Natural killer cell (primary cell): ENCODE measurements at regions of chr14 and their contacts with region 1.

Region 1: DNA sequence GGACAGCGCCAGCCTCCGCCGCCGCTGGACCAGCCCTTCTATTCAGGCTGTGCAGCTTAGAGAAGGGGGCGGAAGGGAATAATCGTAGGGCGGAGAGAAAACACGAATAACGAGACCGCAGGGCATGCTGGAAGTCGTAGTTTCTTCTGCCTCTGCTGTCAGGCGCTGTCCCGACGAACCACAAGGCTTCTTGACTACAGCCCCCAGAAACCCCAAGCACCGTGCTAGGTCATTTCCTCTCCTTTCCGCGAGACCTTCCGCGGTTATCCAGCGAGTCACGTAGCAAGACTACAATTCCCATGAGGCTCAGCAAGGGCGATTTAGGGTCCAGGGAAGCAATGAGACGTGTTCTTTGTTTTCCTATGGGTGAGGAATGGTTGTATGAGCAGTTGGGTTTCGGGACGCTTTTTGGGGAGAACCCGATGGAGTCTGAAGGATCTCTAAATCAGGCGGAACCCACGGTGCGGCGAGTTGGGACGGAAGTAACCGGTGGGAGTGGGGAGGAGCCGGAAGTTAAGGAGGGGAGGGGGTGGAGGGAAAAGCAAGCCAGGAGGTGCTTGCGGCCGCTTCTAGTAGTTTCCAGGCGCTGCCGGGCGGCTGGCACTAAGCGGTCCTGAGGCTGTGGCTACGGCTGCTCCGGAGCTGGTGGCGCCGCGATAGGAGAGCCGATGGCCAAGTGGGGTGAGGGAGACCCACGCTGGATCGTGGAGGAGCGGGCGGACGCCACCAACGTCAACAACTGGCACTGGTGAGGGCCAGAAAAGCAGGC is at the starts of genes AHSA1 and VIPAS39:
- DNase-seq: peak; percentile 86 to 98
- ATAC-seq: peak; percentile 93 to 98 (median 93)
- H3K4me3 ChIP-seq: peak within 1 kb of the TSS; percentile 86
- H3K4me3 Mint-ChIP-seq: peak within 1 kb of the TSS; percentile 100
- H3K27ac ChIP-seq: peak within 1 kb of the TSS; percentile 87
- H3K27ac Mint-ChIP-seq: peak within 1 kb of the TSS; percentile 99 to 100
- H3K4me1 ChIP-seq: peaks cover 17% of the 10 kb centered on the region
- H3K4me1 Mint-ChIP-seq: peaks cover 44 to 50% of the 10 kb centered on the region in 2 donors
- H3K27me3 ChIP-seq: no peaks in the 10 kb centered on the region
- H3K27me3 Mint-ChIP-seq: no peaks in the 10 kb centered on the region
- CTCF ChIP-seq: no peak
- total RNA-seq, gene AHSA1: 70.4 to 101 (median 94.3) TPM
- total RNA-seq, gene VIPAS39: 11.2 to 14.4 (median 13.0) TPM

Region 2: GRCh38 chr14:77320238-77320935 is 137.3 kb before region 1 on chr14 and contains the start of gene POMT2:
- intact Hi-C with region 1: loop called (anchors 1 kb)
- DNase-seq: peak; percentile 92 to 95
- ATAC-seq: peak; percentile 51 to 77 (median 66)
- H3K4me3 ChIP-seq: peak within 1 kb of the TSS; percentile 63
- H3K4me3 Mint-ChIP-seq: peak within 1 kb of the TSS; percentile 97
- H3K27ac ChIP-seq: peak within 1 kb of the TSS; percentile 88
- H3K27ac Mint-ChIP-seq: peak within 1 kb of the TSS; percentile 96 to 97
- H3K4me1 ChIP-seq: peaks cover 11% of the 10 kb centered on the region
- H3K4me1 Mint-ChIP-seq: peaks cover 13 to 14% of the 10 kb centered on the region in 2 donors
- H3K27me3 ChIP-seq: no peaks in the 10 kb centered on the region
- H3K27me3 Mint-ChIP-seq: no peaks in the 10 kb centered on the region
- CTCF ChIP-seq: peak; percentile 37
- total RNA-seq, gene POMT2: 6.7 to 10.9 (median 8.6) TPM

Region 3: GRCh38 chr14:77390188-77390587 is 67.5 kb before region 1 on chr14:
- intact Hi-C with region 1: no loop called
- DNase-seq: no peak
- ATAC-seq: no peak
- H3K4me3 ChIP-seq: no peak overlapping the region
- H3K4me3 Mint-ChIP-seq: no peak overlapping the region
- H3K27ac ChIP-seq: no peak overlapping the region
- H3K27ac Mint-ChIP-seq: no peak overlapping the region
- H3K4me1 ChIP-seq: no peaks in the 10 kb centered on the region
- H3K4me1 Mint-ChIP-seq: no peaks in the 10 kb centered on the region
- H3K27me3 ChIP-seq: no peaks in the 10 kb centered on the region
- H3K27me3 Mint-ChIP-seq: peaks cover 0 to 6% of the 10 kb centered on the region in 2 donors
- CTCF ChIP-seq: no peak

Region 4: DNA sequence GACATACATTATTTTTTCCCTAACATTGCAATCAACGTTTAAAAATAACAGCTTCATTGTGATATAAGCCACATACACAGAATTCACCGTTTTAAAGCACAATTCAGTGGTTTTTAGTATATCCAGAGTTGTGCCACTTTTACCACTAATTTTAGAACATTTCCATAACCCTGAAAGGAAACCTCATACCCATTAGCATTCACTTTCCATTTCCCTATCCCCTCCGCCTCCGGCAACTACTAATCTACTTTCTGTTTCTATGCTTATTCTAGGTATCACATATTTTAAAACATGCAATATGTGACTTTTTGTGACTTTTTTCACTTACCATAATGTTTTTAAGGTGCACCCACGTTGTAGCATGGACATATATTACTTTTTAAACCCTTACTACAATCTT is 96.5 kb after region 1 on chr14:
- intact Hi-C with region 1: loop called (anchors 2 kb)
- DNase-seq: no peak
- ATAC-seq: peak; percentile 28 to 69 (median 62)
- H3K4me3 ChIP-seq: no peak overlapping the region
- H3K4me3 Mint-ChIP-seq: peak overlapping the region; percentile 75
- H3K27ac ChIP-seq: peak overlapping the region; percentile 58
- H3K27ac Mint-ChIP-seq: peak overlapping the region; percentile 74 to 84
- H3K4me1 ChIP-seq: peaks cover 13% of the 10 kb centered on the region
- H3K4me1 Mint-ChIP-seq: peaks cover 14 to 20% of the 10 kb centered on the region in 2 donors
- H3K27me3 ChIP-seq: no peaks in the 10 kb centered on the region
- H3K27me3 Mint-ChIP-seq: no peaks in the 10 kb centered on the region
- CTCF ChIP-seq: no peak

Region 5: DNA sequence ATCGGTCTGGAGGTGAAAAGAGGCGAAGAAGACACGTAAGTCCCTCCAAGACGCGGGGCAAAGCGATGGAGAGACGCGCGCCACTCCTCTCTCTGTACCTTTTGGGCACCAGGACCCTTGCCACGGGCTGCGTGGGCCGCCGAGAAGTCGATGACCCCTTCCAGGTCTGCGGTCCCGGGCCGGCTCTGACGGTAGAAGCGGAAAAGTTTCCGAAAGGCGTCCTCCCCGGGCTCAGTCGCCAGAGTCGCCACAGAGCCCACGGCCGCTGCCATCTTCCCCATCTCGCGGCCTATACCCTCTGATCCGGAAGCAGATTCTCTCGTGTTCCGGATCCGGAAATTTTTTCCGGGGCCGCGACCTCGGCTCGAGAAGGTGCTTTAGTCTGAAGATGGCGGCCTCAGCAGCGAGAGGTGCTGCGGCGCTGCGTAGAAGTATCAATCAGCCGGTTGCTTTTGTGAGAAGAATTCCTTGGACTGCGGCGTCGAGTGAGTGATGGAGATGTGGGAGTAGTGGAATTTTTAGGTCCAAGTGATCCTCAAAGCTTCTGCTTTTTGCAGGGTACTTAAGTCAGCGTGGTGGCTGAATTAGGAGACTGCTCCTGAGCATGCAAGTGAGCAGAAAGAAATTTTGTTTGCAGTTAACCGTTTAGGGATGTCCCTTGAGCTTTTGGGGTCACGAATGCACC is 250.2 kb after region 1 on chr14 and contains the starts of genes ALKBH1 and SLIRP:
- intact Hi-C with region 1: loop called (anchors 1 kb)
- DNase-seq: peak; percentile 82 to 93
- ATAC-seq: peak; percentile 97 to 99 (median 98)
- H3K4me3 ChIP-seq: peak within 1 kb of the TSS; percentile 88
- H3K4me3 Mint-ChIP-seq: peak within 1 kb of the TSS; percentile 97
- H3K27ac ChIP-seq: peak within 1 kb of the TSS; percentile 30
- H3K27ac Mint-ChIP-seq: peak within 1 kb of the TSS; percentile 89 to 91
- H3K4me1 ChIP-seq: peaks cover 13% of the 10 kb centered on the region
- H3K4me1 Mint-ChIP-seq: peaks cover 32 to 37% of the 10 kb centered on the region in 2 donors
- H3K27me3 ChIP-seq: no peaks in the 10 kb centered on the region
- H3K27me3 Mint-ChIP-seq: no peaks in the 10 kb centered on the region
- CTCF ChIP-seq: no peak
- total RNA-seq, gene ALKBH1: 3.6 to 10.2 (median 7.1) TPM
- total RNA-seq, gene SLIRP: 29.5 to 33.1 (median 31.6) TPM

Region 6: GRCh38 chr14:77799863-77800730 is 342.4 kb after region 1 on chr14 and contains the start of gene ADCK1:
- intact Hi-C with region 1: loop called (anchors 1 kb)
- DNase-seq: peak; percentile 75 to 88
- ATAC-seq: peak; percentile 88 to 93 (median 91)
- H3K4me3 ChIP-seq: peak within 1 kb of the TSS; percentile 54
- H3K4me3 Mint-ChIP-seq: peak within 1 kb of the TSS; percentile 87
- H3K27ac ChIP-seq: peak within 1 kb of the TSS; percentile 67
- H3K27ac Mint-ChIP-seq: peak within 1 kb of the TSS; percentile 80 to 90
- H3K4me1 ChIP-seq: peaks cover 11% of the 10 kb centered on the region
- H3K4me1 Mint-ChIP-seq: peaks cover 5 to 9% of the 10 kb centered on the region in 2 donors
- H3K27me3 ChIP-seq: no peaks in the 10 kb centered on the region
- H3K27me3 Mint-ChIP-seq: no peaks in the 10 kb centered on the region
- CTCF ChIP-seq: peak; percentile 8
- total RNA-seq, gene ADCK1: 8.0 to 9.2 (median 8.5) TPM